Caco-2 (cell line): ENCODE measurements at regions of chr4 and their contacts with region 1.

Region 1: DNA sequence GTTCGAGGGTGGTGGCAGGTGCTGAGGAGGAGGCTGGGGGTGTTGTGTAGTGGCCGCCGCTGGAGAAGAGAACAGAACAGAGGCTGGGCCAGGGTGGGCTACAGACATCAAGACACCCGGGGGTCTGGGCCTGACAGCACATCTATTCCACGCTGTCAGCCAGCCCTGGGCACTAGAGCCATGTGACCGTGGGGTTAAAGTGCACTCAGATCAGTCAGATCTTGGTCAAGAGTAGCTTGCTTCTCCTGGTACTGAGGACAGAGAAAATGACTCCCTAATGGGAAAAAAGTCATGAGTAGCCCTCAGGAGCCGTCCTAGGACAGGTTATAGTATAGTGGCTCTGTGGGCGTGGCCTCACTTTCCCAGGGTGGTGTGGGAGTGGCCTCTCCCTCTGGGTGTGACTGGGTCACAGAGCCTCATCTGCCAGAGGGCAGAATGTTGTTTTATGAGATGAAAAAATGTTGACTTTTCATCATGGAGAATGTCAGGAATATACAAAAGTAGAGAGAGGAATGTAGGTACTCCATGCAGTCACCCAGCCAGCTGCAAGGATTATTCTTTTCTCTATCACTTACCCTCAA is 19.4 kb downstream of the TRMT44 start:
- DNase-seq: peak; percentile 86 to 90
- H3K4me3 ChIP-seq: no peak overlapping the region
- H3K4me3 Mint-ChIP-seq: no peak overlapping the region
- H3K27ac Mint-ChIP-seq: peak overlapping the region; percentile 70
- H3K4me1 ChIP-seq: peaks cover 21% of the 10 kb centered on the region
- H3K4me1 Mint-ChIP-seq: peaks cover 17% of the 10 kb centered on the region
- H3K27me3 ChIP-seq: no peaks in the 10 kb centered on the region
- H3K27me3 Mint-ChIP-seq: no peaks in the 10 kb centered on the region
- CTCF ChIP-seq: no peak

Region 2: DNA sequence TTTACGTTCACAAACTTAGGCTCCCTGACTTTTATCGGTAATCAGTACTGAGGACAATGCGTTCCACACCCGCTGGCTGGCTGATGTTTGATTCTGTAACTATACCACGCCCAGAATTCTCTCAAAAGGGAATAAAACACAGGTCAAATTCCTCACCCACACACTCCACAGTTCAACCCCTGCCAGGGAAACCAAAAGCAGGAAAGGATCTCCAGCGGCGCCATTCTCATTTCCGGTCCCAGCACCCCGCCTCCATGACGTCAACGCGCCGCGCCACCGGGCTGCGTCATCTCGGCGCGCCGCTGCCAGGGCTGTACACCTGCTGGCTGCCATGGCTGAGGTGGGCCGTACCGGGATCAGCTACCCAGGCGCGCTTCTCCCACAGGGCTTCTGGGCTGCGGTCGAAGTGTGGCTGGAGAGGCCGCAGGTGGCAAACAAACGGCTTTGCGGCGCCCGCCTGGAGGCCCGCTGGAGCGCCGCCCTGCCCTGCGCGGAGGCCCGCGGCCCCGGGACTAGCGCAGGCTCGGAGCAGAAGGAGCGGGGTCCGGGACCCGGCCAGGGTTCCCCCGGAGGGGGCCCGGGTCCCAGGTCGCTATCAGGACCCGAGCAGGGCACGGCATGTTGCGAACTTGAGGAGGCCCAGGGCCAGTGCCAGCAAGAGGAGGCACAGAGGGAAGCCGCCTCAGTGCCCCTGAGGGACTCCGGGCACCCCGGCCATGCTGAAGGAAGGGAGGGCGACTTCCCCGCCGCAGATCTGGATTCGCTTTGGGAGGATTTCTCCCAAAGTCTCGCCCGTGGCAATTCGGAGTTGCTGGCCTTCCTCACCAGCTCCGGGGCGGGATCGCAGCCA is 19.2 kb before region 1 on chr4 and contains the starts of genes ACOX3 and TRMT44:
- CTCF ChIA-PET with region 1: no interaction called
- POLR2A ChIA-PET with region 1: interaction called, 4 read pairs
- intact Hi-C with region 1: loop called (anchors 2 kb)
- DNase-seq: peak; percentile 90 to 97
- H3K4me3 ChIP-seq: peak within 1 kb of the TSS; percentile 96
- H3K4me3 Mint-ChIP-seq: peak within 1 kb of the TSS; percentile 84
- H3K27ac Mint-ChIP-seq: peak within 1 kb of the TSS; percentile 98
- H3K4me1 ChIP-seq: peaks cover 7% of the 10 kb centered on the region; the same call in 1 of the 2 replicates
- H3K4me1 Mint-ChIP-seq: peaks cover 35% of the 10 kb centered on the region
- H3K27me3 ChIP-seq: no peaks in the 10 kb centered on the region
- H3K27me3 Mint-ChIP-seq: no peaks in the 10 kb centered on the region
- CTCF ChIP-seq: no peak
- total RNA-seq, gene ACOX3: 11.5 and 14.1 TPM in 2 replicates
- total RNA-seq, gene TRMT44: 22.3 and 23.4 TPM in 2 replicates

Region 3: GRCh38 chr4:8534129-8534528 is 74.2 kb after region 1 on chr4:
- CTCF ChIA-PET with region 1: no interaction called
- POLR2A ChIA-PET with region 1: no interaction called
- intact Hi-C with region 1: loop called (anchors 5 kb)
- DNase-seq: peak; percentile 86 to 87
- H3K4me3 ChIP-seq: peak overlapping the region; percentile 2
- H3K4me3 Mint-ChIP-seq: peak overlapping the region; percentile 65
- H3K27ac Mint-ChIP-seq: peak overlapping the region; percentile 78
- H3K4me1 ChIP-seq: peaks cover 39% of the 10 kb centered on the region
- H3K4me1 Mint-ChIP-seq: peaks cover 36% of the 10 kb centered on the region
- H3K27me3 ChIP-seq: no peaks in the 10 kb centered on the region
- H3K27me3 Mint-ChIP-seq: no peaks in the 10 kb centered on the region
- CTCF ChIP-seq: no peak